ENCODE measurements at regions of chr16 and their contacts with region 1.

Region 1: DNA sequence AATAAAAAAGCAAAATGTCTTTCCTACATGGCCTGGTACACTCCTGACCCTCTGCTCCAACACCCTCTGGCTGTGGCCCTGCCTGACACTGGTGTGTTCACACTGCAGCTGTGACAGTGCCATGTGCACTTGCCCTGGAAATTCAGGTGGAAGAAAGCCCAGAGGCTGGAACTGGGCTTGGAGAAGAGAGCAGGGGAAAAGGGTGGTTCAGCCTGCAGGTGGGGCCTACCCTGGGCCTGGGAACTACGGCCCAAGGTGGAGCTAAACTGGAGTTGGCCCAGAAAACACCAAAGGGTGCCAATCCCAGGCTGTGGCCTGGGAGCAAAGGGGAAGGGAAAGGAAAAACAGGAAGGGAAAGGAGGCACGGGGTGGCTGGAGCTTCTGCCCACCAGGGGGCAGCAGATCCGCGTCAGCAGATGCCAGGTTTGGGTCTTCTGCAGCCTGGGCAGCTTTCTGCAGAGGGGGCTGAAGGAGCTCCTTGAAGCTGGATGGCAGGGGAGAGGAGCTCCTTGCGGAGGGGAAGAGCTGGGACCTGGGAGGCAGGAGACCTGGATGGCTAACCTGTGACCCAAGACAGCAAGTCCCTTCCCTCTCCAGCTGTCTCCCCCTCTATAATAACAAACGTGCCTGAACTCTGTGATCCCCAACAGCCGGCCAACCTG is 15.4 kb upstream of the CTCF start:
- DNase-seq: peak; percentile 81
- ATAC-seq: peak; percentile 57
- H3K4me3 Mint-ChIP-seq: no peak overlapping the region
- H3K27ac Mint-ChIP-seq: peak overlapping the region; percentile 97
- H3K4me1 Mint-ChIP-seq: peaks cover 40% of the 10 kb centered on the region
- H3K27me3 Mint-ChIP-seq: no peaks in the 10 kb centered on the region

Region 2: GRCh38 chr16:67480833-67481560 is 65.9 kb before region 1 on chr16 and contains the start of gene ATP6V0D1:
- CTCF ChIA-PET with region 1: interaction called, 15 read pairs
- DNase-seq: peak; percentile 99
- ATAC-seq: peak; percentile 88
- H3K4me3 Mint-ChIP-seq: peak within 1 kb of the TSS; percentile 99
- H3K27ac Mint-ChIP-seq: peak within 1 kb of the TSS; percentile 99
- H3K4me1 Mint-ChIP-seq: peaks cover 31% of the 10 kb centered on the region
- H3K27me3 Mint-ChIP-seq: no peaks in the 10 kb centered on the region
- total RNA-seq, gene ATP6V0D1: 42.1 to 58.3 TPM

Region 3: DNA sequence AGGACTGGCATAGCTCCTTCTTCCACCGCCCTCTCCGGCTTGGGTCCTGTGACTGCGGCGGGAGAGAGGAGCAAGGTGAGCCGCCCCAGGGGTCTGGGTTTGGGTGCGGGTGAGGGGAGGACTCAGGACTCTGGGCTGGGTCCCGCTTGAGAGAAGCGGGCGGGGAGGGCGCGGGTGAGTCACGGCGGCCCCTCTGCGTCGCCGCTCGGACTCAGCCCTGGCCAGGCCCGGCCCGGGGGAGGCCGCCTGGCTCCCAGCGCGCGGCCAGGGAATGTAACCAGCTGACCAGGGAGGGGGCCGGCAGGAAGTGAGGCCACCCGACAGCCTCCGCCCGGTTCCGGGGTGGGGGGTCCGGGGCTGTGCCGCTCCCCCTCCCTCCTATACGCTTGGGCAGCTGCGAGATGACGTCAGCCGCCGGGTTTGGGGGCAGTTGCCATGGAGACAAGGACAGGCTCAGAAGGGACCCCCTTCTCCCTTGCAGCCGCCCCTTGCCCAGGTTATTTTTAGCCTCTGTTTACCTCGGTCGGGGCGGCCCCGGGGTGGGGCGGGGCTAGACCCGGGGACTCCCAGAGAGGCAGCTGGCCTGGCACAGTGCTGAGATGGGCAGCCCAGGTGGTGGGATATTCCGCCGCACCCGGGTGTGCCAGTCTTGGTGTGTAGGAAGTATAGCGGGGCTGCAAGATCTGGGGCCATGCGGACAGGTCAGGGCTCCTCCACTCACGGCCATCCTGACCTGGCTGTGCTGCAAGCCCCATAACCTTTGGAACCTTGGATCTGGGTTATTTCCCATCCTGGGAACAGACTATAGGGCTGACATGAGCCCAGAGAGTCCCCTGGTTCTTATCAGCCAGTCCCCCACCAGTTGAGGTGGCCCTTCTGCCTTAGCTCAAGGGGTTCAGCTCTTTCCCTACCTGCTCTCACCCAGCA is 16.6 kb before region 1 on chr16:
- CTCF ChIA-PET with region 1: interaction called, 16 read pairs
- DNase-seq: no peak
- ATAC-seq: no peak
- H3K4me3 Mint-ChIP-seq: peak overlapping the region; percentile 42
- H3K27ac Mint-ChIP-seq: no peak overlapping the region
- H3K4me1 Mint-ChIP-seq: peaks cover 18% of the 10 kb centered on the region
- H3K27me3 Mint-ChIP-seq: peaks cover 56% of the 10 kb centered on the region

Region 4: GRCh38 chr16:67595033-67595355 is 48.1 kb after region 1 on chr16:
- CTCF ChIA-PET with region 1: interaction called, 15 read pairs
- DNase-seq: no peak
- ATAC-seq: peak; percentile 51
- H3K4me3 Mint-ChIP-seq: no peak overlapping the region
- H3K27ac Mint-ChIP-seq: peak overlapping the region; percentile 58
- H3K4me1 Mint-ChIP-seq: peaks cover 32% of the 10 kb centered on the region
- H3K27me3 Mint-ChIP-seq: no peaks in the 10 kb centered on the region

Region 5: DNA sequence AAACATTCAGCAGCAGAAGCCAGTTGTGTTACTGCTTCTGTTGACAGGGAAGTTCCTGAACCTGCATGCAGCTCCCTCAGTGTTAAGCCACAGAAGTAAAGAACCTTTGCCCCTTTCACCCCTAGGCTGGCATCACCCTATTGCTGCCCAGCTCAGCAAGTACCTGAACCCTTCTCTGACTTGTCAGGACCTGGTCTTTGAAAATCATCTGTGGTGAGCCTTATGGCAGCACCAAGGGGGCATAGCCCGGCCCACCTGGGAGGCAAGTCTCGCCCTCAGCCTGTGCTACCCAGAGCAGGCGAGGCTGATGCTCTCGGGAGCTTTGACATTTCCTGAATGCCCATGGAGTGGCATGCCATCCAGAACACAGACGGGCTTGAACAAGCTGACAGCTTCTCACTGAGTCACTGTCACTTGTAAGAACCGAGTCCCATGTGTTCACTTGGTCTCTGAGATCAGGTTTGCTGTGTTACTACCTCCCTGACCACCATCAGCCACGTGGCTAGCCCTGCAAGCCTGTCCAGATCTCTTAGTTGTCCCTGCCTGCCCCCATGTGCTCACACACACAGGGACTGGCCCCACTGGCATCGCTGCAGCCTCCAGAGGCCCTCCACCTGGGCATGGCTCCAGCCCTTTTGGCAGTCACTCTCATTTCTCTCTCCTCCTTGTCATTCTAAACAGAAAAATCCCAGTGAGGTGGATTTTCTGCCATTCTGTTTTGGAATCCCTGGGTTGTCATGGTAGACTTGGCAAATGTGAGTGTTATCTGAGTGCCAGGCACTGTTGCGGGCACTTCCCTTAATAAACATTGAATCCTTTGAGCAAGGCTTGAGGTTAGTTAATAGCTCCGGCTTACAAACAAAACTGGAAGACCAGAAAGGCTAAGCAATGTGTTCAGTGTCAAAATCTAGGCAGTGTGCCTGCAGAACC is 95.2 kb after region 1 on chr16:
- CTCF ChIA-PET with region 1: interaction called, 307 read pairs
- DNase-seq: no peak
- ATAC-seq: no peak
- H3K4me3 Mint-ChIP-seq: no peak overlapping the region
- H3K27ac Mint-ChIP-seq: no peak overlapping the region
- H3K4me1 Mint-ChIP-seq: peaks cover 15% of the 10 kb centered on the region
- H3K27me3 Mint-ChIP-seq: no peaks in the 10 kb centered on the region

Region 6: GRCh38 chr16:67667817-67668494 is 121.1 kb after region 1 on chr16:
- CTCF ChIA-PET with region 1: interaction called, 46 read pairs
- DNase-seq: peak; percentile 90
- ATAC-seq: peak; percentile 81
- H3K4me3 Mint-ChIP-seq: no peak overlapping the region
- H3K27ac Mint-ChIP-seq: no peak overlapping the region
- H3K4me1 Mint-ChIP-seq: peaks cover 12% of the 10 kb centered on the region
- H3K27me3 Mint-ChIP-seq: no peaks in the 10 kb centered on the region

Region 7: DNA sequence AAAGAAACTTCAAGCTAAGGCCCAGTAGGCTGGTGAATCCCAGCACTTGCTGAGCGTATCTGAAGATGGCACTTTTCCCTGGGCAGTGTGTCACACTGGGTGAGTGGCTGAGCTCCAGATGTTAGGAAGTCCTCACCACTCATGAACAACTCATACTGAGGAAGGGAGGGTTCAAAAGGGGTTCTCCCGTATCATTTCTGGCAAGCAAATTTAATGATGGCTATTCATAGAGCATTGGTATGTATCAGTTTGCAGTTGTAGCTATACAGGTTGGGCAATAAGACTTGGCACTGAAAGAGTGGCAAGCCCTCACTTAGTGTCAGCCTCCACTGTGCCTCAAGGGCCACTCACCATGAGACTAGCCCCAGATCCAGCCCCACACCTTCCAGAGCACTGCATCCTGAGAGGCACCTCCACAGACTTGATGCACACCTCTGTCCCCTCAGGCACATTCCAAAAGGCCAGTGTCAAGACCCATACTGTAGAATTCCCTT is 161.5 kb after region 1 on chr16:
- CTCF ChIA-PET with region 1: no interaction called
- DNase-seq: no peak
- ATAC-seq: no peak
- H3K4me3 Mint-ChIP-seq: no peak overlapping the region
- H3K27ac Mint-ChIP-seq: no peak overlapping the region
- H3K4me1 Mint-ChIP-seq: peaks cover 14% of the 10 kb centered on the region
- H3K27me3 Mint-ChIP-seq: no peaks in the 10 kb centered on the region